ENCODE measurements at regions of chr7 and their contacts with region 1.

Region 1: DNA sequence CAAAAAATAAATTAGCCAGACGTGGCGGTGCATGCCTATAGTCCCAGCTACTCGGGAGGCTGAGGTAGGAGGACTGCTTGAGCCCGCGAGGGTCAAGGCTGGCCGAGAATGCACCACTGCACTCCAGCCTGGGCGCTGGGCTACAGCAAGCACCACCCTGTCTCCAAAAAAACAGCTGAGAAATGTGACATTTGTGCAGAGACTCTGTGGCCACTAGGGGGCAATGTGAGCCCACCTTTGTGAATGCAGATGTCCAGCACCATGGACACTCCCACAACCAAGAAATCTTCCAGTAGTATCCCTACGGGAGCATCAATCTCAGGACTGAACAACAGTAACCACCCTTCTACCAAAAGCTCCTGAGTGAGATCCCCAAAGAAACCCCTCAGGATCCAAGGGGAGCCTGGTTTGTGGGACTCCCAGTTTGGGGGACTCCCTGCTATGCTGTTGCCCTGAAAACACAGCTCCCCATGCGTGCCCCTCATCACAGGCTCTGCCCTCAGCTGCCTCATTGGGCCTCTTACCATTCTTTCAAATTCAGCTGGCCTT is 6.2 kb upstream of the AHCYL2 start:
- DNase-seq: peak; percentile 88 to 90
- H3K4me3 ChIP-seq: no peak overlapping the region
- H3K27ac ChIP-seq: no peak overlapping the region
- H3K4me1 ChIP-seq: peaks cover 0 to 6% of the 10 kb centered on the region in 2 donors
- H3K27me3 ChIP-seq: no peaks in the 10 kb centered on the region
- CTCF ChIP-seq: peak; percentile 82 to 97 (median 92)
- POLR2A ChIP-seq: no peak

Region 2: DNA sequence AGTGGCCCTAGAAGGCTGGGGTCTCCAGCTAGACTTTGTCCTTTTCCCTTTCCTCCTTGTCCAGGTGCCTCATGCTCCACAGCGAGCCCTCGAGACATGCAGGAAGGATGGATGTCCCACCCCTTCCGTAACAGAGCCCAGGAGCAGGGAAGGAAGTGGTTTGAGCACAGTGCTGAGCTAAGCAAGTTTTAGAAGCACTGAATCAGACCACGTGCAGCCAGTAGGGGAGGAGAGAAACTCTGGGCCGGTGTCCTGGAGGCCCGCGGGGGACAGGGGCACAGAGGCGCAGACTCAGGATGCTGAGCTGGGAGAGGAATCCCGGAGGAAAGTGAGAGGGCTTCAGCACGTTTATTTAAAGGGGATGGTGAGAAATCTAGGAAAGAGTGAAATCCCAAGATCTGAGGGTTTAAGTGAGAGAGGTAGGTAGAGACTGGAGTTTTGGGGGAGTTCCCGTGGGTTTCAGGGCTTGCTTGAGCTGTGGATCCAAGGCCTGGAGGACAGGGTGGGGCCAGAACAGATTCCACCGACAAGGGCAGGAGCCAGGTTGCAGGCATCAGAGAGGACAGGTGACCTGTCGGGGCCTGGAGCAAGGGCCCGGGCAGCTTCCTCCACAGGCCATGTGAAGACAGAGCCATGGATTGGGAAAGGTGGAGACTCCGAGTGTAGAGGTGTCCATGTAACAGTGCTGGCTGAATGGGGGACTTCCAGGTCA is 285.3 kb before region 1 on chr7:
- intact Hi-C with region 1: no loop called
- DNase-seq: no peak
- H3K4me3 ChIP-seq: no peak overlapping the region
- H3K27ac ChIP-seq: no peak overlapping the region
- H3K4me1 ChIP-seq: peaks cover 0 to 4% of the 10 kb centered on the region in 2 donors
- H3K27me3 ChIP-seq: no peaks in the 10 kb centered on the region
- CTCF ChIP-seq: no peak
- POLR2A ChIP-seq: no peak

Region 3: GRCh38 chr7:129271500-129272355 is 53.1 kb after region 1 on chr7:
- intact Hi-C with region 1: loop called (anchors 5 kb)
- DNase-seq: peak; percentile 60 to 66
- H3K4me3 ChIP-seq: no peak overlapping the region
- H3K27ac ChIP-seq: no peak overlapping the region
- H3K4me1 ChIP-seq: no peaks in the 10 kb centered on the region
- H3K27me3 ChIP-seq: no peaks in the 10 kb centered on the region
- CTCF ChIP-seq: peak; percentile 43 to 88 (median 76)
- POLR2A ChIP-seq: no peak

Region 4: GRCh38 chr7:129298268-129298893 is 79.8 kb after region 1 on chr7:
- intact Hi-C with region 1: loop called (anchors 2 kb)
- DNase-seq: peak; percentile 63 to 77
- H3K4me3 ChIP-seq: no peak overlapping the region
- H3K27ac ChIP-seq: no peak overlapping the region
- H3K4me1 ChIP-seq: peaks cover 0 to 15% of the 10 kb centered on the region in 2 donors
- H3K27me3 ChIP-seq: no peaks in the 10 kb centered on the region
- CTCF ChIP-seq: peak; percentile 25 to 81 (median 65)
- POLR2A ChIP-seq: no peak

Measured in thyroid gland (tissue), 4 donors.